ENCODE measurements at regions of chr22 and their contacts with region 1.

Region 1: GRCh38 chr22:48035897-48036296 is 1273.4 kb downstream of the TBC1D22A start:
- DNase-seq: no peak
- ATAC-seq: no peak
- H3K4me3 ChIP-seq: no peak overlapping the region
- H3K4me3 Mint-ChIP-seq: no peak overlapping the region
- H3K27ac ChIP-seq: no peak overlapping the region
- H3K27ac Mint-ChIP-seq: no peak overlapping the region
- H3K4me1 ChIP-seq: peaks cover 7 to 14% of the 10 kb centered on the region in 2 donors
- H3K4me1 Mint-ChIP-seq: peaks cover 12% of the 10 kb centered on the region
- H3K27me3 ChIP-seq: peaks cover 0 to 4% (median 0%) of the 10 kb centered on the region in 4 experiments
- H3K27me3 Mint-ChIP-seq: peaks cover 16% of the 10 kb centered on the region
- CTCF ChIP-seq: no peak

Region 2: GRCh38 chr22:47408409-47408808 is 627.5 kb before region 1 on chr22:
- CTCF ChIA-PET with region 1: no interaction called
- POLR2A ChIA-PET with region 1: no interaction called
- intact Hi-C with region 1: no loop called
- DNase-seq: no peak
- ATAC-seq: no peak
- H3K4me3 ChIP-seq: no peak overlapping the region
- H3K4me3 Mint-ChIP-seq: no peak overlapping the region
- H3K27ac ChIP-seq: no peak overlapping the region
- H3K27ac Mint-ChIP-seq: no peak overlapping the region
- H3K4me1 ChIP-seq: no peaks in the 10 kb centered on the region
- H3K4me1 Mint-ChIP-seq: no peaks in the 10 kb centered on the region
- H3K27me3 ChIP-seq: no peaks in the 10 kb centered on the region
- H3K27me3 Mint-ChIP-seq: peaks cover 11% of the 10 kb centered on the region
- CTCF ChIP-seq: no peak

Region 3: DNA sequence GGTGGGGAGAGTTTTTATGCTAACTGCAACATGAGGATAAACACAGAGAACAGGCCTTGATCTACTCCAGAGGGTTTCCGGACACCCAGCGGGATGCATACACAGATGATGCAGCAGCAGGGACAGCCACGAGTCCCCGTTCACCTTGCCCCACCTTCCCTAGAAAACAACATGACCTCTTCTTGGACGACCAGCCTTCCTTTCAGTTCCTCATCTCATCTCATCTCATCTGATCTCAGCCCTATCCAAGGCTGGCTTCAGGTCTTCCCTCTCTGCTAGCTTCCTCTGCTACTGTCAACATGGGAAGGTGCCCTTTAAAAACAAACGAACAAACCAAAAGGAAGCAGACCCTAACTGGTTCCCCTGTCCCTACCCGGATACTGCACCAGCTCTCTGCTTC is 82.8 kb after region 1 on chr22:
- CTCF ChIA-PET with region 1: no interaction called
- POLR2A ChIA-PET with region 1: no interaction called
- intact Hi-C with region 1: loop called (anchors 5 kb)
- DNase-seq: peak; percentile 32
- ATAC-seq: no peak
- H3K4me3 ChIP-seq: no peak overlapping the region
- H3K4me3 Mint-ChIP-seq: no peak overlapping the region
- H3K27ac ChIP-seq: no peak overlapping the region
- H3K27ac Mint-ChIP-seq: peak overlapping the region; percentile 1
- H3K4me1 ChIP-seq: peaks cover 13 to 14% of the 10 kb centered on the region in 2 donors
- H3K4me1 Mint-ChIP-seq: peaks cover 16% of the 10 kb centered on the region
- H3K27me3 ChIP-seq: no peaks in the 10 kb centered on the region
- H3K27me3 Mint-ChIP-seq: no peaks in the 10 kb centered on the region
- CTCF ChIP-seq: no peak

Measured in B cell (primary cell).